ENCODE measurements at regions of chr6 and their contacts with region 1.

Region 1: DNA sequence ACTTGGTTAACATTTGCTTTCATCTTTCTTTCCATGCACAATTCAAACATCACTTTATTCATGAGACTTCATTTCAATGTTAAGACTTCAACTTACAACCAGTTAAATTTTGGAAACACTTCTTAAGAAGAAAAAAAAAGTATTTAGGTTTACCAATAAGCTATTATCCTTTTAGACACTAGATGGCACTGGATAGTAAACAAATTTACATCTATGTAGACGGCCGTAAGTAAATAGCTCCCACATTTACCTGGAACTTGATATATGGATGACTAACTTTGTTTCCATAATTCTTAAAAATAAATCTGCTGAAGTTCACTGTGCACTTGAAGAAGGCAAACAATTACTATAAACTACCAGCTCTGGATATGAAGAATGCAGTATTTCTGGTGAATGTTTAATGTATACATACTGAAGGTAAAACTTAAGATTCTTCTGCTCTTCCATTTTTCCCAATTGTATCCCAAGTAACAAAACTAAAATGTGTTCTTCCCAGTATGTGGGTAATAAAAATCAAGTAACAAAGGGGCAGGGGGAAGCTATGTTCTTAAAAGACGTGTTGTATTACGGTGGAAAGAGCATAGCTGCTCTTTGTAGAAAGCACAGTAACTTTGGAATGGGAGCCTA is 130.6 kb upstream of the C6orf118 start:
- DNase-seq: peak; percentile 8
- H3K4me3 ChIP-seq: no peak overlapping the region
- H3K27ac ChIP-seq: no peak overlapping the region
- H3K4me1 ChIP-seq: no peaks in the 10 kb centered on the region
- H3K27me3 ChIP-seq: no peaks in the 10 kb centered on the region
- CTCF ChIP-seq: peak; percentile 41 to 49

Region 2: GRCh38 chr6:164982389-164982788 is 457.7 kb before region 1 on chr6:
- CTCF ChIA-PET with region 1: no interaction called
- dilution Hi-C with region 1: no loop called
- in situ Hi-C with region 1: no loop called
- intact Hi-C with region 1: no loop called
- DNase-seq: no peak
- H3K4me3 ChIP-seq: no peak overlapping the region
- H3K27ac ChIP-seq: no peak overlapping the region
- H3K4me1 ChIP-seq: no peaks in the 10 kb centered on the region
- H3K27me3 ChIP-seq: no peaks in the 10 kb centered on the region
- CTCF ChIP-seq: no peak

Region 3: GRCh38 chr6:165508321-165508869 is 68.4 kb after region 1 on chr6:
- CTCF ChIA-PET with region 1: no interaction called
- dilution Hi-C with region 1: no loop called
- in situ Hi-C with region 1: no loop called
- intact Hi-C with region 1: no loop called
- DNase-seq: no peak
- H3K4me3 ChIP-seq: no peak overlapping the region
- H3K27ac ChIP-seq: no peak overlapping the region
- H3K4me1 ChIP-seq: no peaks in the 10 kb centered on the region
- H3K27me3 ChIP-seq: no peaks in the 10 kb centered on the region
- CTCF ChIP-seq: no peak

Region 4: DNA sequence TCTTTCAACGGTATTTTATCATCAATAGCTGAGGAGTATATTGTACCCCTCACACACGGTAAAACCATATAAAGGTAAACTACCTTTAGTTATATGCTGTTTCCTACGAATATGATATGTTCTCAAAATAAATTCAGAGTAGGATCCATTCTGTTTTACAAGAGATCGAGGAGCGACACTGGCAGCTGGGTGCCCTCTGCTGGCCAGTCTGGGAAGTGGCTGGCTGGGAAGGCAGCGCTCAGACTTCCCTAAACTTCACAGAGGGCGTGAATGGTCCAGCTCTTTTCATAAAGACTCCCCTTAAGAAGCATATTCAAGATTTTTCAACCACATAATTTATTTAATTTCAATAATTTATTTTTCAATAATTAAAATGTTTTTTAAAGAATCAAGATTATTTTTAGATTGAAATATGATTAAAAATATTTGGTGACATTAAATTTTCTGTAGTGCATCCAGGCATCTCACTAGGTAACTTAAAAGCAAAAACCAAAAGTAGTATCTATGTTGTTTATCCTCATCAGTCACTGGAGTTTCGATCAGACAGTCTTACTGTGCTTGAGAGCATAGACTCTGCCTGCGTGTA is 410.5 kb after region 1 on chr6:
- CTCF ChIA-PET with region 1: interaction called, 6 read pairs
- dilution Hi-C with region 1: no loop called
- in situ Hi-C with region 1: loop called in 1 of 2 experiments (anchors 10 kb)
- intact Hi-C with region 1: loop called (anchors 1 kb)
- DNase-seq: peak; percentile 19
- H3K4me3 ChIP-seq: no peak overlapping the region
- H3K27ac ChIP-seq: no peak overlapping the region
- H3K4me1 ChIP-seq: no peaks in the 10 kb centered on the region
- H3K27me3 ChIP-seq: no peaks in the 10 kb centered on the region
- CTCF ChIP-seq: peak; percentile 72 to 86

Measured in mammary epithelial cell (primary cell).